ENCODE measurements at regions of chr16 and their contacts with region 1.

Region 1: GRCh38 chr16:69424053-69424934 is at the start of gene CYB5B:
- DNase-seq: peak; percentile 99
- H3K4me3 ChIP-seq: peak within 1 kb of the TSS; percentile 65 to 100 (median 96)
- H3K27ac ChIP-seq: peak within 1 kb of the TSS; percentile 44
- H3K4me1 ChIP-seq: peaks cover 10% of the 10 kb centered on the region
- H3K27me3 ChIP-seq: no peaks in the 10 kb centered on the region
- CTCF ChIP-seq: no peak
- POLR2A ChIP-seq: peak; percentile 90
- total RNA-seq, gene CYB5B: 169 and 176 TPM in 2 replicates

Region 2: GRCh38 chr16:69243479-69243878 is 180.8 kb before region 1 on chr16:
- CTCF ChIA-PET with region 1: no interaction called
- POLR2A ChIA-PET with region 1: no interaction called
- dilution Hi-C with region 1: no loop called
- intact Hi-C with region 1: no loop called
- DNase-seq: no peak
- H3K4me3 ChIP-seq: no peak overlapping the region
- H3K27ac ChIP-seq: no peak overlapping the region
- H3K4me1 ChIP-seq: peaks cover 2% of the 10 kb centered on the region
- H3K27me3 ChIP-seq: no peaks in the 10 kb centered on the region
- CTCF ChIP-seq: no peak
- POLR2A ChIP-seq: no peak

Region 3: GRCh38 chr16:69410285-69410990 is 13.9 kb before region 1 on chr16:
- CTCF ChIA-PET with region 1: interaction called, 3 read pairs
- POLR2A ChIA-PET with region 1: interaction called, 8 read pairs
- dilution Hi-C with region 1: no loop called
- intact Hi-C with region 1: loop called (anchors 1 kb)
- DNase-seq: peak; percentile 95
- H3K4me3 ChIP-seq: peak overlapping the region in 1 of 3 experiments; percentile 23
- H3K27ac ChIP-seq: peak overlapping the region; percentile 81
- H3K4me1 ChIP-seq: peaks cover 17% of the 10 kb centered on the region
- H3K27me3 ChIP-seq: no peaks in the 10 kb centered on the region
- CTCF ChIP-seq: no peak
- POLR2A ChIP-seq: peak; percentile 70

Region 4: DNA sequence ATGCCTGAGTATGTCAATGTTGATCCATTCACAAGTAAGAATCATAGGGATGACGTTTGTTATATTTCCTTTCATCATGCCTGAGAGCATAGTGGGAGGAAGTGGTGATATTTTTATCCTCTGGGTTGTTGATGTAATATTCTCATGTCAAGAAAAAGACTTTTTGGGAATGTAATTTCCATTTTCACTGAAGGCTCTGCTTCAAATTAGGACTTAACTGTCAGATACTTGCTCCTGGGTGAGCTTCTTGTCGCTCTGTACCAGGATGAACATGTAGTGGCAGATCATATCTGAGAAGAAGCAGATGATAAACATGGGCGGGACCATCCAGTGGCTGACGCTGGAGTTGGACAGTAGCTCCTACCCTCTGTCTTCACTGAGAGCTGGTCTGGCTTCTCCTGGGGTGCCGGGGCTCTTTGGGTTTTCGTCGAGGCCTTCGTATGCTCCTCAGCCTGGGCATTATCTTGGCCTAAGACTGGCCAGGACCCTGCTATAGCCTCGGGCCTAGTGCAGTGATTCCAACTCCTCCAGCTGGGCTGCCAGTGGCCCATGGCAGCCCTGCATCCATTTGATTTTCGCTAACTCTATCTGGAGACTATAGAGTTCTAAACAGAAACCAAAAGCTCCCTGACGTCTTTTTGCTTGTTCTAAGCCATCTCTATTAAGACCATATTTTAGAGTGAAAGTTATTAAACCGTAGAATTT is 19.8 kb after region 1 on chr16:
- CTCF ChIA-PET with region 1: interaction called, 3 read pairs
- POLR2A ChIA-PET with region 1: no interaction called
- dilution Hi-C with region 1: no loop called
- intact Hi-C with region 1: loop called (anchors 2 kb)
- DNase-seq: peak; percentile 61
- H3K4me3 ChIP-seq: no peak overlapping the region
- H3K27ac ChIP-seq: peak overlapping the region; percentile 64
- H3K4me1 ChIP-seq: peaks cover 13% of the 10 kb centered on the region
- H3K27me3 ChIP-seq: no peaks in the 10 kb centered on the region
- CTCF ChIP-seq: no peak
- POLR2A ChIP-seq: no peak